GM10248 (cell line): ENCODE measurements at regions of chrX and their contacts with region 1.

Region 1: GRCh38 chrX:20530406-20530921 is 263.8 kb upstream of the RPS6KA3 start:
- DNase-seq: peak; percentile 24
- CTCF ChIP-seq: peak; percentile 54

Region 2: DNA sequence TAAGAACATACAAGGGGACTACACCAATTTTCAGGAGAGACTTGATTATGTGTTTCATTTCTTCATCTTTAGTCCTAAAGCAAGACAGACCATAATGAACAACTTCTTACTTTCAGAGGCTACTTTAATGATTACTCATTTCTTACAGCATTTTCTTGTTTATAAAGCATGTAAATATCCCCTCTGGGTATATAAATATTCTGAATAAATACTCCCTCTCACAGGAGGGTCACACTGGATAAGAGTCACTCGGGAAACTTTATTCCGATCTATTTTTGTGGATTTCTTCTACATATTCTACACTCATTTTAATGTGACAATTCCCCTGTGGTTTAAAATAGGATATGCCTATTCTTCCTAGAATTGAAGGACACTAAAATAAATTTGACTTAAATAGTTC is 34.9 kb before region 1 on chrX:
- CTCF ChIA-PET with region 1: no interaction called
- POLR2A ChIA-PET with region 1: no interaction called
- DNase-seq: no peak
- CTCF ChIP-seq: no peak

Region 3: GRCh38 chrX:20515841-20516461 is 14.5 kb before region 1 on chrX:
- CTCF ChIA-PET with region 1: interaction called, 37 read pairs
- POLR2A ChIA-PET with region 1: no interaction called
- DNase-seq: peak; percentile 35
- CTCF ChIP-seq: no peak

Region 4: GRCh38 chrX:21479695-21480270 is 949.3 kb after region 1 on chrX:
- CTCF ChIA-PET with region 1: interaction called, 46 read pairs
- POLR2A ChIA-PET with region 1: no interaction called
- DNase-seq: peak; percentile 27
- CTCF ChIP-seq: peak; percentile 51

Region 5: DNA sequence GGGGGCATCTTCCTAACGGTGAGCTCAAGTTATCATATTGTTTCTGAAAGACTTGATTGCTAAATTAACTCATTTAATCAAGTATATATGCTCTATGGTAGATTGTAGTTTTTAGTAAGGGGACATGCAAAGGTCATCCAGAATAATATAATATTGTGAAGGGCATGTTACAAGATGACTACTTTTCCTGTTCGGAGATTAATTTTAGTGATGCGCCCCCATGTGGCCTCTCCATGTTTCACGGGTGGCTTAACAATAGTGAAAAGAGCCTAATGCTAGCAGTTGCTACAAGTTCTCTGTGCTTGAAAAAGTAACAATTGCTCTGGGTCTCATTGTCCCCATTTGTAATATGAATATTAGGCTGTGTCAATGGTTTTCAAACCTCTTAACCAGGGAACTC is 1215.3 kb after region 1 on chrX:
- CTCF ChIA-PET with region 1: interaction called, 16 read pairs
- POLR2A ChIA-PET with region 1: no interaction called
- DNase-seq: peak; percentile 11
- CTCF ChIP-seq: peak; percentile 33